ENCODE measurements at regions of chr5 and their contacts with region 1.

Region 1: DNA sequence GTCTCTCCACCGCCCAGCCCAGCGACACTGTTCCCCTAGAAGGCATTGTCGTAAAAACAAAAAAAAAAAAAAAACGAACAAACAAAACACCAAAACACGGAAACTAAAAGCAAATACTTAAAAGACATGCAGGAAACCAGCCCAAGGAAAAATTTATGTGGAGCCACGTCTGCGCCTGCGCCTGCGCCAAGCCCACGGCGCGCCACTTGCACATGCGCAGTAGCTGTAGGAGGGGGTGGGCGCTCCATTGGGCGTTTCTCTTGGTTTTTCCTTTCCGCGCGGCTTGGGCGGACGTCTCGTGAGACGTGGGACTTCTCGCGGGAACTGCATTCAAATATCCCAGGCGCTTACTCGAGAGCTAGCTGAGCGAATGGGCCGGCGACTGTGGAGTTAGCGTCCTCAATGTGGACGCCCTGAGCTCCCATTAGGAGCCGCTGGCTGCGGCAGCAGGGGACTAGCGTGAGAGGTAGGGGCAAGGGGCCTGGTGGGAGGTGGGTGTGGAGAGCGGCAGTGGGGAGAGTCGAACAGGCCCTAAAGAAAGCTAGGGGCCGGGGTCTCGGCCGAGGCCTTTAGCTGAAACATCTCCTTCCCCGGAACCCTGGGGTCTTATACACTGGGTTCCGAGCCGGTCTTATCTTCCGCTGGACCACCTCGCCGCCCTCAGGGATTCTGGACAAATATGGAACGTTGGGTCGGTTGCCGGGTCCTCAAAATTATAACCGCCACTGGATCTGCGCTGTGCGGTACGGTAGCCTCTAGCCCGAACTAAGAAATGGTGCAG is at the start of gene SPDL1:
- DNase-seq: peak; percentile 97
- H3K4me3 ChIP-seq: peak within 1 kb of the TSS; percentile 79
- H3K27ac ChIP-seq: peak within 1 kb of the TSS; percentile 55
- H3K4me1 ChIP-seq: peaks cover 13% of the 10 kb centered on the region
- CTCF ChIP-seq: no peak
- total RNA-seq, gene SPDL1: 27.4 and 40.4 TPM in 2 replicates

Region 2: DNA sequence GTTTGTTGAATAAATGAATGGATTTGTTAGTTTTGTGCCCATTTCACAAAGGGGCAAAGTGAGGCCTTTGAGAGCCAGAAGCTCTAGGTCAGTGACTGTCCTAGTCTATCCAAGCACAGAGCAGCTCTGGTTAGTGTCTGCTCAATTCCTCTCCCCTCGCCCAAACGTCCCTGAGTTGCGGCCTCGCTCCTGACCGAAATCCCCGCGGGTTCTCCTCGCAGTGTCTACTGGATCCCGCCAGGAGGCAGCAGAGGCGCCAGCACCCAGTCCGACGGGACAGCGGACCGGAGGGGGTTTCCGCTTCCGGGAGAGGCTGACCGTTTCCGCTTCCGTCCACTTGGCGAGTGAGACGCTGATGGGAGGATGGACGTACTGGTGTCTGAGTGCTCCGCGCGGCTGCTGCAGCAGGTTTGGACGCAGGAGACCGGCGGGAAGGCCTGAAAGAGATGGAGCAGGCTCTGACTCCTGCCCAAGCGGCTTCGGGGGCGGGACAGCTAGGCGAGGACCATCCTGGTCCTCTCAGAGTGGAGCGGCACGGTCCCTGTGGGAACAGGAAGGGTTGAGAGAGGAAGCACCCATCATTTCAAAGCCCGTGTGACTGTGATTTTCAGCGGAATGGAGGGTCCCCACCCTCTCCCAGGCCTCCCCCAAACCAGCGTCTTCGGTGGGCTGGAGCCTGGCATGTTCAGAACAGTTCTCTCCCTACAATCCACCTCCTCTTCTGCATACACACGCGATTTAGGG is 1097.3 kb before region 1 on chr5 and contains the start of gene RARS1:
- CTCF ChIA-PET with region 1: no interaction called
- POLR2A ChIA-PET with region 1: no interaction called
- intact Hi-C with region 1: loop called (anchors 10 kb)
- DNase-seq: peak; percentile 92
- H3K4me3 ChIP-seq: peak within 1 kb of the TSS; percentile 99
- H3K27ac ChIP-seq: peak within 1 kb of the TSS; percentile 48
- H3K4me1 ChIP-seq: peaks cover 7% of the 10 kb centered on the region
- CTCF ChIP-seq: peak; percentile 88
- total RNA-seq, gene RARS1: 54.4 and 62.1 TPM in 2 replicates

Region 3: GRCh38 chr5:168679515-168679920 is 904.1 kb before region 1 on chr5:
- CTCF ChIA-PET with region 1: no interaction called
- POLR2A ChIA-PET with region 1: no interaction called
- intact Hi-C with region 1: loop called (anchors 5 kb)
- DNase-seq: peak; percentile 59
- H3K4me3 ChIP-seq: no peak overlapping the region
- H3K27ac ChIP-seq: no peak overlapping the region
- H3K4me1 ChIP-seq: no peaks in the 10 kb centered on the region
- CTCF ChIP-seq: peak; percentile 92

Region 4: DNA sequence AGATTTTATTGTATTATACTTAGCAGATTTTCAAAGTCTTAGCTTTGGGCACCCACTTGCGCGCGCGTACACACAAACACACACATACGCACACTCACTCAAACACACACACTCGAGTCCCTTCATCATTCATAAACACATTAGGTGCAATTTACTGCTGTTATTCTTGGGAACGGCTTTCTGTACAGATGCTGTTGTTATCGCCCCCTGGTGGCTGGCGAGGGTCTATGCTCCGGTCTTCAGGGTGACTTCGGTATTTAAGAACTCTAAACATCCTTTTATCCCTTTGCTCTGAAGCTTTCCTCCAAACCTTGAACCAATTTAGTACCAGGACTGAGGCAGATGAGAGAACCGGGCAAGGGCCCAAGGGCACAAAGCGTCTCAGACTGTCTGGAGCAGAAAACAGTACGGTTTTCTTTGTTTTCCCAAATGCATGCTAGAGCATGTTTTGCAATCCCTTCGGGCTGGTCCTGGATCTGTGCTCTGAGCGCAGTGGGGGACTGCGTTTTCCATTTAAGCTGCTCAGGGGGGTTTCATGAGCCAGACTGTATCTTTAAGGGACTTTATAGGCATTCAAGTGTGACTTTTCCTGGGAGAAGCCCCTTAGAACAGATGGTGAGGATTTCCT is 281.0 kb before region 1 on chr5:
- CTCF ChIA-PET with region 1: no interaction called
- POLR2A ChIA-PET with region 1: no interaction called
- intact Hi-C with region 1: loop called (anchors 5 kb)
- DNase-seq: peak; percentile 70
- H3K4me3 ChIP-seq: no peak overlapping the region
- H3K27ac ChIP-seq: no peak overlapping the region
- H3K4me1 ChIP-seq: no peaks in the 10 kb centered on the region
- CTCF ChIP-seq: peak; percentile 96

Region 5: DNA sequence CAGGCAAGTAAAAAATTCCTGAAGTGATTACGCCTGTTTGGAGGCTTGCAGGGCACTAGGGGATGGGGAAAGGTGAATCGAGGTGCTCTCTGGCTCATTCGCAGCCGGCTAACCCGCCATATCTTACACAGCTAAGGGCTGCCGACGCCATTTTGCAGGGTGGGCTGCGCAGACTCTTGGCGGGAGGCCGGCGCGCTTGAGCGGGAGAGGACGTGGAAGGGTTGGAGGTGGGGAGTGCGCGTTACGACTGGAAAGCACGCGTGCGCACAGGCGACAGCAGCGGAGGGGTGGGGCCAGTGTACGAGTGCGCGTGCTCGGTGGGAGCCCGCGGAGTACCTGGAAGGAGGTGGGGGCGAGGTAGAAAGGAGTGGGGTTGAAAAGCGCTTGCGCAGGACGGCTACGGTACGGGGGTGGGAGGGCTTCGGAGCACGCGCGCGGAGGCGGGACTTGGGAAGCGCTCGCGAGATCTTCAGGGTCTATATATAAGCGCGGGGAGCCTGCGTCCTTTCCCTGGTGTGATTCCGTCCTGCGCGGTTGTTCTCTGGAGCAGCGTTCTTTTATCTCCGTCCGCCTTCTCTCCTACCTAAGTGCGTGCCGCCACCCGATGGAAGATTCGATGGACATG is 1803.8 kb after region 1 on chr5 and contains the start of gene NPM1:
- CTCF ChIA-PET with region 1: no interaction called
- POLR2A ChIA-PET with region 1: interaction called, 3 read pairs
- intact Hi-C with region 1: loop called (anchors 10 kb)
- DNase-seq: peak; percentile 98
- H3K4me3 ChIP-seq: peak within 1 kb of the TSS; percentile 99
- H3K27ac ChIP-seq: peak within 1 kb of the TSS; percentile 82
- H3K4me1 ChIP-seq: peaks cover 37% of the 10 kb centered on the region
- CTCF ChIP-seq: no peak
- total RNA-seq, gene NPM1: 1,091 and 1,434 TPM in 2 replicates